Heart left ventricle (tissue), 16 donors: ENCODE measurements at regions of chr18 and their contacts with region 1.

Region 1: DNA sequence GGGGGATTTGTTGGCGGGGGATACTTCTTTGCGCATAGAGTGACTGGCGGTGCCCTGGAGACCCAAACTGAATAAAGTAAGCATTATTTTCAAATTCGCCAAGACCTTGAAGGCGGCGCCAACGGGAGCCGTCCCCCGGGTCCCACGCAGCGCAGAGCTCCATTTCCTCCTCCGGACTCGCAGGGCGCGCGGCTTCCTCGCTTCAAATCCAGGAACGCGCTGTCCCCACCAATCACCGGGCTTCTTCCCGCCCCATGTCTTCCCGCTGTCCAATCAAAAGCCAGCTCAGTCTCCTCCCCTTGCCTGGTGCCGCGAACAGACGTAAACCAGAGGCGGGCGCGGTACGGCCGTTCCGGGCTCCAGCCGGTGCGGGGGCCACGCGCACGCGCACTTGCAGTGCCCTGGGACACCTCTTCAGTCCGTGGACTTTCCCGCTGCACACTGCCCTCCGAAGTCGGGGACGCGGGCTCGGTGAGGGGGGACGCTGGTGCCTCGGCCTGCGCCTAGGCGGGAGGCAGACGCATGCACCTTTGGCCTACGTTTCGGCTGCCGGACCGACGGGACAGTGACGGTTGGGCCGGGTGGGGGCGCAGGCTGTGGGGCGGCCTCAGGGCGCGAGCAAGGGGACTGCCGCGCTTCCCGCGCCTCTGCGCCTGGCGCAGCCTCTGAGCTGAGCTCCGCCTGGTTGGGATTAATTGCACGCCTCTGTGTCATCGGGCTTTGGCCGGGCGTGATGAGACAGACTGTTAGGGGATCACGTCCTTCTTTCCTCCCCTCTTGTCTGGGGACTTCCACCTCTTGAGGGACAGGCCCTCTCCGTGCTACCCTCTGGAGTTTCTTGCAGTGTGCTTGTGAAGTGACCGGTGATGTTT is at the start of gene CEP192:
- DNase-seq: peak; percentile 97 to 98 (median 98)
- ATAC-seq: peak; percentile 98 to 99 (median 99)
- H3K4me3 ChIP-seq: peak within 1 kb of the TSS; percentile 52 to 97 (median 84)
- H3K27ac ChIP-seq: peak within 1 kb of the TSS; percentile 69 to 95 (median 87)
- H3K4me1 ChIP-seq: peaks cover 0 to 36% (median 15%) of the 10 kb centered on the region in 12 donors
- H3K27me3 ChIP-seq: no peaks in the 10 kb centered on the region
- CTCF ChIP-seq: peak in 4 of 12 donors; percentile 21 to 31 (median 23)
- POLR2A ChIP-seq: peak; percentile 51 to 89
- total RNA-seq, gene CEP192: 21.5 to 36.3 (median 27.5) TPM

Region 2: DNA sequence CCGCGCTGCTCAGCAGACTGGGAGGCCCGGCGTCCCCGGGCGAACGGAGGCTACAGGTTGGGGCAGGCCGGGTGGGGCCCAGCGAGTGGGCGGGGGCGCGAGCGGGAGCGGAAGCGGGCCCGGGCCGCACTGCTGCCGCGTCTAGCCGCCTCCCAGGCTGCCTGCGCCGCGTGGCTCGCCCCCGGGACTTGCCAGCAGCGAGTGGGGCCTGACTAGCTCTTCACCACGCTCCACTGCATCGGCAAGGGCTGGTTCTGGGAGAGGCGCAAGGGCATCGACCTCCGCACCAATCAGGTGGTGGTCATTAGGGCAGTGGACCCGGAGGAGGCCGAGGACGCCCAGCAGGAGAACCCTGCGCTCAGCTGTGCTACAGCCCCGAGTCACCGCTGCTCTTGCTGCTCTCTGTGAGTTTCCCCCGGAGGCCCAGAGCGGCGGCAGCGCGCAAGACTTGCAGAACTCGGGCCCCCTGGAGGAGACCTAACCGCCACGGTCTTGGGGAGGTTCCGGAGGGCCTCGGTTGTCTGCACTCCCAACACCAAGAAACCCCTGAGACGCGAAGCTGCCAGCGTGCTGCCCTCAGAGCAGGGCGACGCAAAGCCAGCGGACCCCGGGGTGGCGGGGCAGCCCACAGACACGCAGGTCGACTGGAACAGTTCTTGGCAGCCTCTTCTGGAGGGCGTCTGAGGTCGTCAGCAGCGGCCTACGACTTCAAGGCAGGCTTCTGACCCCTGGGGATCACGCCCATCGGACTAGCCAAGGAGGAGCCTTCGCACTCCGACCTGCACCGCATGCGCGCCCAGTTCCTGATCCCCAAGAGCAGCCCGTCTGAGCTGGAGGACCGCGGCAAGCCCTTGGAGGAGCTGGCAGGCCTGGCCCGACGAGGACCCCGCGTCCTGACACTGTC is 79.9 kb before region 1 on chr18:
- intact Hi-C with region 1: no loop called
- DNase-seq: peak in 4 of 5 donors; percentile 29 to 73 (median 38)
- ATAC-seq: peak in 3 of 4 donors; percentile 65 to 81 (median 77)
- H3K4me3 ChIP-seq: peak overlapping the region; percentile 7 to 54 (median 40)
- H3K27ac ChIP-seq: peak overlapping the region in 1 of 12 donors; percentile 1
- H3K4me1 ChIP-seq: peaks cover 0 to 28% (median 13%) of the 10 kb centered on the region in 12 donors
- H3K27me3 ChIP-seq: peaks cover 0 to 42% (median 14%) of the 10 kb centered on the region in 9 donors
- CTCF ChIP-seq: no peak
- POLR2A ChIP-seq: no peak

Region 3: GRCh38 chr18:13112982-13113381 is 121.8 kb after region 1 on chr18:
- intact Hi-C with region 1: no loop called
- DNase-seq: peak; percentile 79 to 92 (median 83)
- ATAC-seq: peak; percentile 96 to 100 (median 98)
- H3K4me3 ChIP-seq: no peak overlapping the region
- H3K27ac ChIP-seq: peak overlapping the region in 9 of 12 donors; percentile 32 to 73 (median 47)
- H3K4me1 ChIP-seq: peaks cover 0 to 20% (median 0%) of the 10 kb centered on the region in 12 donors
- H3K27me3 ChIP-seq: no peaks in the 10 kb centered on the region
- CTCF ChIP-seq: peak; percentile 25 to 72 (median 55)
- POLR2A ChIP-seq: no peak

Region 4: DNA sequence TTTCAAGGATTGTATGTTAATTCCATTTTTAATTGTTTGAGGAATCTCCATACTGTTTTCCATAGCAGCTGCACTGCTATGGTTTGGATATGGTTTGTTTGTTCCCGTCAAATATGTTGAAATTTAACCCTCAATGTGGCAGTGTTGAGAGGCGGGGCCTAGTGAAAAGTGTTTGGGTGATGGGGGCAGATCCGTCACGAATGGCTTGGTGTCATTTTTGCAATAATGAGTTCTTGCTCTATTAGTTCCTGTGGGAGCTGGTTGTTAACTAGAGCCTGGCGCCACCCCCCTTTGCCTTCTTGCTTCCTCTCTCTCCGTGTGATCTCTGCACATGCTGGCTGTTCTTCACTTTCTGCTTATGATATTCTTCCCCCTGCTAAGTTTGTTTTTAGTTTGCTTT is 155.9 kb after region 1 on chr18:
- intact Hi-C with region 1: no loop called
- DNase-seq: no peak
- ATAC-seq: no peak
- H3K4me3 ChIP-seq: no peak overlapping the region
- H3K27ac ChIP-seq: no peak overlapping the region
- H3K4me1 ChIP-seq: peaks cover 0 to 7% (median 0%) of the 10 kb centered on the region in 12 donors
- H3K27me3 ChIP-seq: no peaks in the 10 kb centered on the region
- CTCF ChIP-seq: no peak
- POLR2A ChIP-seq: no peak

Region 5: DNA sequence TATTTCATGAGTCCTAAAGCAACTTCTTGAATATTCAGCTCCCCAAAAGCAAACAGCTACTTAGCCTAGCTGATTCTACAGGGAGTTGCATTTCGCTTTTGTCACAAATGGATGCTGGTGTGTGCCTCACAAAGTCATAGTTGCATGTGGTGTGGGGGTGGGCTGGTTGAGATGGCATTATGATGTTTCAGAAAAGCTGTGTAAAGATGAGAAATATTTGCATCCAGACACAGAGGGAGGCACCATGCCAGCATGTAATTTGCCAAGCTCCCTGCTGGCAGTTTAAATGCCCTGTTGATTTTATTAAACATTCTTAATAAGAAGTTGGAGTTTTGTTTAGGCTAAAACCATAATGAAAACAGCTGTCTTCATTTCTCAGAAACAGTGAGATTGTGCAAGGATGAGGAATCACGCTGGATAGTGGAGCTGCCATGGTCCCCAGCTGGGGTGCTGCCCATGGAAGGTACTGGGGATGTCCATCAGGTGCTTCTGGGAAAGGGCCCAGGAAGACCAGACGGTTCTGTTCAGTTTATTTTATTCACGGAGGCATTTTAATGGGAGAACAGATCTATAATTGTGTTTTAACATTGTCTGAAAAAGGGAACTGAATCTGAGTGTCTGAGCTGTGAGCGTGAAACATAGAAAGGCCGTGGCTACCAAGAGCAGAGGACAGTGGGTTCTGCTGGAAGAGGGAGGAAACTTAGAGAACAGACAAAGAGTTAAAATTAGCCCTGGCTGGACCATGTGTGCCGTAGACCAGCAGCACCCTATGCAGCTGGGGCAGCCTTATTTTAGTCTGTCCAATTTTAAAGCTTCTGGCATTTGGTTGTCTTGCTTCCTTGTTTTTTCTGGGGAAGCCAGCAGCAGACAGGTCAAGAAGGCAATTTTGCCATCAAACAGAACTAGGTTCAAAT is 558.0 kb after region 1 on chr18:
- intact Hi-C with region 1: loop called in 1 of 10 experiments (anchors 10 kb)
- DNase-seq: no peak
- ATAC-seq: peak; percentile 45 to 69 (median 63)
- H3K4me3 ChIP-seq: no peak overlapping the region
- H3K27ac ChIP-seq: peak overlapping the region in 10 of 12 donors; percentile 16 to 81 (median 36)
- H3K4me1 ChIP-seq: peaks cover 2 to 74% (median 27%) of the 10 kb centered on the region in 12 donors
- H3K27me3 ChIP-seq: no peaks in the 10 kb centered on the region
- CTCF ChIP-seq: no peak
- POLR2A ChIP-seq: no peak